ENCODE measurements at regions of chr14 and their contacts with region 1.

Region 1: DNA sequence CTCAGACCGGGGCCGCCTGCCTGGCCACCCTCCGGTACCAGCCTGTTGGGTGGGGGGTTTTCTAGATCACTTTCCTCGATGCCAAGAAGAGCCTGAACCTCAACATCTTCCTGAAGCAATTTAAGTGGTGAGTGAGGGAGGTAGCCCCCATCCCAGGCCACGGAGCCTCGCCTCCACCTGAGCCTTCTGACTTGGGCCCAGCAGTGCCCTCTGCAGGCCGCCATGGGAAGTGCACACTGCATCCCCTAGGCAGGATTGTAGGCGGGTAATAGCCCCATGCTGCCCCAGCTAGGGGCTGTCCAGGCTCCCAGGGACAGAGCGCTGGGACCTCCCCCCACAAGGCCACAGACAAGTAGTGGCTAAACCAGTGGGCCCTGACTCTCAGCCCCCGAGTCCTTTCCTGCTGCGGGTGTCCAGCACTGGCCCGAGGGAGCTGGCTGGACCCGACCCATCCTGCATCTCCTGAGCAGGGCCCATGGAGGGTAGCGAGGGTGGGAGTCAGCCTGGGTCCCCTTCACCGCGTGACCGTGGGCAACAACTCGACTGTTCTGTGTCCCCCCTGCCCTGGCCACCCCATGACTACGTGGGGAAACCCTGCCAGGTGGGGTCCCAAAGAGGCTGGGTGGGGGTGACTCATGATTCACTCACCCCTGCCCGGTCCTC is 15.3 kb upstream of the ADSS1 start:
- DNase-seq: peak; percentile 73 to 91
- ATAC-seq: peak; percentile 86
- H3K4me3 ChIP-seq: no peak overlapping the region
- H3K27ac ChIP-seq: no peak overlapping the region
- H3K4me1 ChIP-seq: no peaks in the 10 kb centered on the region
- H3K27me3 ChIP-seq: no peaks in the 10 kb centered on the region

Region 2: DNA sequence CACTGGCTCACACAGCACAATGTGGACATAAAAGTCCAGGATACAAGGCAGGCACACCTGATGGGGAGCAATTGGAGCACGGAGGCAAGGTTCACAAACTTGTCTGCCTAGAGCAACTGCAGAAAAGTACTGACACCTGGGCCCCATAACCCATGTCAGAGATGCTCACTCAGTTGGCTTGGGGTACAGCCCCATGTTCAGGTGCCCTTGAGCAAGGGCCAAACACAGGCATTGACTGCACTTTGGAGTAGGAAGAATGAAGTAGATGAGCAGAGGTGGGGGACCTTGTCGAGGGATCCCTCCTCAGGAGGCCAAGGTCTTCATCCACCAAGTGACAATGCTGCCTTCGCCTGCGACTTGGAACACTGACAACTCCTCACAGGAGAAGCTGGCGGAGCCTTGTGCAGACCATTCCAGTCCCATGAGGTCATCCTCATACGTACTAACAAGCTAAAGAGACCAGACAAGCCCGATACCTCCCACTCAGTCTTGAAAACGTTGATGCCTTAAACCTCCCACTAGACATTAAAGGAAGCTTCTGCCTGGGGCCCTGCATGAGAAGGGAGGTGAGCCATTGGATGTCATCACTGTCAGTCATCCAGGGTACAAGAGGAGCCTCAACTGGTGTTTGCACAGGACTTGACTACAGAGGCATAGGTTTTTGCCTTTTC is 171.7 kb before region 1 on chr14:
- intact Hi-C with region 1: no loop called
- DNase-seq: no peak
- ATAC-seq: peak; percentile 15
- H3K4me3 ChIP-seq: no peak overlapping the region
- H3K27ac ChIP-seq: no peak overlapping the region
- H3K4me1 ChIP-seq: no peaks in the 10 kb centered on the region
- H3K27me3 ChIP-seq: peaks cover 0 to 1% of the 10 kb centered on the region in 2 donors

Region 3: DNA sequence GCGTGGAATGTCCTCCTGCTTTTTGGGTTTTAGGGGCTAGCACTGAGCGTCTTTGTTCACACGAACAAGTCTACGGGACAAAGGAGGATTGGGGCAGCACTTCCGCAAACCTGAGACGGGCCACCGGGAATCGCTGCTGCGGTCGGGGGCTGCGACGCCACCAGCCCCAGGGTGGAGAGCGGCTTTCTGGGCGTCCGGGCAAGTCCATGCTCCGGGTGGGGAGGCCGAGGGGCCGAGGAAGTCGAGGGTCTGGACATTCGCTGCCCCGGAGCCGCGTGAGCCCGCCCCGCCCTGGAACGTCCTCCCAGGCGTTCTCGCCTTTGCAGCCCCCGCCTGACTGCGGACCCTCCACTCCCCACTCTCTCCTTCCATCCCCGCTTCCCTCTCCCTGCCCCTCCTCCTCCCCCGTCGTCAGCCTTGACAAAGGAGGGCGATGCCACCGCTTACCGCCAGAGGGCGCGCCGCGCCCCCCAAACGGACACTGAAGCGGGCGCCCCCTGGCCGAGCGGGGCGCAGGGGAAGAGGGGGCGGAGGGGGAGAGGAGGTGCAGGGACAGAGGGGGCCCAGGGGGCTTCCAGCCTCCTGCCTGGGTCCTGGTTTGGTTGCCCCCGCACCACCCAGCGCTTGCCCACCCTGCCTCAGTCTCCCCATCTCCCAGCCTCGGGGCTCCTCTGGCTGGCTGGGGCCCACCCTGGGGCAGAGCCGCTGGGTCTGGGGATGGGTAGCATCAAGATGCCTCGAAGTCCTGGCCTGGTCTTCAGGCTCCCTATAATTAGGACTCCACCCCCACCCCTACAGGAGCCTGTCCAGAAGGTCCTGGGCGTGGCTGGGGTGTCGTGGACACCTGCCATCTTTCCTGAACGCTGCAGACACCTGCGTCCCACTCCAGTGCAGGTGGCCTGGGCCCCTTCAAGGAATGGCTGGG is 58.4 kb before region 1 on chr14:
- intact Hi-C with region 1: loop called (anchors 1 to 2 kb)
- DNase-seq: peak; percentile 70 to 90
- ATAC-seq: peak; percentile 87
- H3K4me3 ChIP-seq: no peak overlapping the region
- H3K27ac ChIP-seq: no peak overlapping the region
- H3K4me1 ChIP-seq: no peaks in the 10 kb centered on the region
- H3K27me3 ChIP-seq: no peaks in the 10 kb centered on the region

Region 4: DNA sequence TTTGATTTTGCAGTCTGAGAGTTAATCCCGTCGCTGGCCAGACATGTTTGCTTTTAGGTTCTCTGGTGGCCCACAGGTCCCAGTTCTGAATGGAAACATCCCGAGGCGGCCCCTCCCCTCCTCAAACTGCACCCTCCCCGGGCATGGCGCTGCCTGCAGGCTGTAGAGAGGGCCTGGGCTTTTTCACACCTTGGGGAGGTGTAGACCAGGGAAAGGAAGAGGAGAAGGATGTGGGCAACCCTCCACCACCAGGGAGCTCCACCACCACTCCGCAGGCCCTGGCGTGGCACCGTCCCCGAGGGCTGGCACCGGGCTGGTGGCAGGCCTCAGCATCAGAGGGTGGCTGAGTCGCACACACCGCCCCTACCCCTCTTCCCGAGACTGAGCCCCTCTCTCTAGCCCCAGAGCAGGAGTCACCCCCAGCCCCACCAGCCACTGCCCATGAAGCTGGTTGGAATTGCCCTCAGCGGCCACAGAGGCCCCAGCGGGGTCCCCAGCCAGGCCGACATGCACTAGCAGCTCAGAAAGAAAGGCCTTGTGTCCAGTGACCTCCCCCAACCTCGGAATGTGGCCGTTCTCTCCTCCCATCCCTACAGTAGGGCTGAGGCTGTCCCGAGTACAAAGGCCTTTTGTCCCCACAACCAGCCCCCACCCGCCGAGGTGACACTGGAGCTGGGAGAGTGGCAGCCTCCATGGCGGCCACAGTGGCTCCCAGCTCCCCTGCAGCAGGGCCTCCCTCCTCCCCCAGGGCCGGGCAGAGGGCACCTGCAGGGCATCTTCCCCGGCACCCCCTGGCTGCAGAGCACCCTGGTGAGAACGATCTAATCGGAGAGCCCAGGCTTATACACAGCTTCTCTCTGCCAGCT is 42.8 kb before region 1 on chr14:
- intact Hi-C with region 1: loop called (anchors 1 to 5 kb)
- DNase-seq: peak in 1 of 2 donors; percentile 79
- ATAC-seq: peak; percentile 72
- H3K4me3 ChIP-seq: no peak overlapping the region
- H3K27ac ChIP-seq: no peak overlapping the region
- H3K4me1 ChIP-seq: no peaks in the 10 kb centered on the region
- H3K27me3 ChIP-seq: no peaks in the 10 kb centered on the region